RWPE1 (cell line): ENCODE measurements at regions of chr12 and their contacts with region 1.

Region 1: GRCh38 chr12:110600254-110600653 is 13.7 kb upstream of the TCTN1 start:
- DNase-seq: peak; percentile 58
- H3K27ac ChIP-seq: no peak overlapping the region
- CTCF ChIP-seq: peak; percentile 35

Region 2: GRCh38 chr12:110338754-110339153 is 261.5 kb before region 1 on chr12:
- CTCF ChIA-PET with region 1: no interaction called
- POLR2A ChIA-PET with region 1: no interaction called
- DNase-seq: no peak
- H3K27ac ChIP-seq: peak overlapping the region; percentile 48
- CTCF ChIP-seq: no peak

Region 3: GRCh38 chr12:110449799-110450497 is 150.3 kb before region 1 on chr12 and contains the start of gene ARPC3:
- CTCF ChIA-PET with region 1: interaction called, 20 read pairs
- POLR2A ChIA-PET with region 1: no interaction called
- DNase-seq: peak; percentile 85
- H3K27ac ChIP-seq: peak within 1 kb of the TSS; percentile 90
- CTCF ChIP-seq: peak; percentile 90

Region 4: DNA sequence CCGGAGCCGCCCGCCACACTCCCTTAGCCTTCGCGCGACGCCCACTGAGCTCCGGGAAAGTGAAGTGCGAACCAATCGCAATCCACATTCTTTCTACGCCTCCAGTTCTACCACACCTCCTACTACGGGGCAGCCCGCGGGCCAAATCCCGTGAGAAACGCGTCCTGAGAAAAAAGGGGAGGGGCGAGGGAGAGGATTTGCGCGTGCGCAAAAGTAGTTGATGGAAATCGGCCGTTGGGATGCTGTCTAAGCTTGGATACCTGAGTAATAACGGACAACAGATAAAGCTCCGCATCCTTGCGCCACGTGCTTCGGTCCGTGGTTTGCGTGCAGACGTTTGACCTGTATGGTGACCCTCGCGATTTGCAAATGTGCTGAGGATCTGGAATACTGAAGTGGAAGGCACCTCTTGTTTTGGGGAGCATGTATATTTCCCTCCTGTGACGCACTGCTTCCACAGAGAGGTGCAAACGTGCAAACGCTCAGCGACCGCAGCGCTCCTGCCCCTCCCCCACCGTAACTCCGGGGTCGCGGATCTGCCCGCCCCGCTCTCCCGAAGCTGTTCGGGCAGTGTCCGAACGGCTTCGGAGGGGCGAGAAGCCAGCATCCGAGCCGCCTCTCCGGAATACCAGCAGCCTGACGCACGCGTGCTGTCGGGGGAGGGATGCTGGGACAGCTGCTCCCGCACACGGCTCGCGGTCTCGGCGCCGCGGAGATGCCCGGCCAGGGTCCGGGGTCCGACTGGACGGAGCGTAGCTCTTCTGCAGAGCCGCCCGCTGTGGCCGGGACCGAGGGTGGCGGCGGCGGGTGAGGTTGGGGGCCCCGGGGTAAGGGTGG is 131.8 kb before region 1 on chr12 and contains the starts of genes FAM216A and GPN3:
- CTCF ChIA-PET with region 1: interaction called, 19 read pairs
- POLR2A ChIA-PET with region 1: interaction called, 3 read pairs
- DNase-seq: peak; percentile 94
- H3K27ac ChIP-seq: peak within 1 kb of the TSS; percentile 97
- CTCF ChIP-seq: no peak

Region 5: GRCh38 chr12:110508071-110508586 is 92.1 kb before region 1 on chr12:
- CTCF ChIA-PET with region 1: interaction called, 29 read pairs
- POLR2A ChIA-PET with region 1: interaction called, 3 read pairs
- DNase-seq: no peak
- H3K27ac ChIP-seq: no peak overlapping the region
- CTCF ChIP-seq: no peak